ENCODE measurements at regions of chr2 and their contacts with region 1.

Region 1: DNA sequence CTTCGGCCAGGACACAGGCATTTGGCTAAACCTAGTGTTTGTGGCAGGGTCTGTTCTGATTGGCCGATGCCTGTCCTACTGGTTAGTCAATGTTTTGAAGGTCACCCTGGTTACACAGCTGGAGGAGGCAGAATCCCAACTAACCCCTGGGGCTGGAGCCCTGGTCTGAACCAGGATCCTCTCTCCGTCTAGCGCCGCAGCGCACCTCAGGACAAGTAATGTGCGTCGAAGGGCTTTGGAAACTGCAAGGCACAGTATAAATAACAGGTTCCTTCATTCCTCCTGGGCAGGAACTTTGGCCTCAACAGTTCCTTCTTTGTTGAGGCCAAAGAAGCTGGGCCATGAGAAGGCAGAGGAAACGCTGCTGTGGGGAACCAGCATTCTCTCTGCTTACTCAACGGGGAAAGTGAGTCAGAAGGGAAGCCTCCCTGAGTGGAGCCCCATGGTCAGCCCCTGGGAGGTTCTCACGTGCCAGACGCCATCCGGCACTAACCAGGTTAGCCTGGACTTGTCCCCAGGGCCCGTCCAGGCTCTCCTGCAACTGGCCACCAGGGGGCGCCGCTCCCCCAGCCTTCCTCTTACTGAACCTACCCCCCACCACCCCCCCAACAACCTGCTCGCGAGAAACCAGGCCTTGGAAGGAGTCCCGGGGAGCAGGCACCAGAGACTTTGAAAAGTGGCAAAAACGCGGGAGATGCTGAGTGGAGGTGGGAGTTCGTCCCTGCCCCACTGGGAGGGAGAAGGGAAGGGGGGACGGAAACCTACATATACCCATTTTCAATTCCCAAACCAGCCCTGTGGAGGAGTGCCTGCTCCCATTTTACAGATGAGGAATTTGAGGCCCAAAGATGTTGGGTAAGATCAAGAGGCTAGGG is 19.8 kb downstream of the TEX44 start:
- DNase-seq: peak; percentile 71
- H3K4me3 ChIP-seq: no peak overlapping the region
- CTCF ChIP-seq: peak; percentile 87

Region 2: GRCh38 chr2:231523451-231524285 is 88.7 kb before region 1 on chr2:
- CTCF ChIA-PET with region 1: no interaction called
- POLR2A ChIA-PET with region 1: no interaction called
- DNase-seq: no peak
- H3K4me3 ChIP-seq: no peak overlapping the region
- CTCF ChIP-seq: no peak

Region 3: GRCh38 chr2:231563378-231563961 is 48.9 kb before region 1 on chr2:
- CTCF ChIA-PET with region 1: interaction called, 15 read pairs
- POLR2A ChIA-PET with region 1: no interaction called
- DNase-seq: no peak
- H3K4me3 ChIP-seq: no peak overlapping the region
- CTCF ChIP-seq: peak; percentile 79

Region 4: GRCh38 chr2:231583982-231584381 is 28.4 kb before region 1 on chr2:
- CTCF ChIA-PET with region 1: no interaction called
- POLR2A ChIA-PET with region 1: no interaction called
- DNase-seq: no peak
- H3K4me3 ChIP-seq: no peak overlapping the region
- CTCF ChIP-seq: no peak

Region 5: GRCh38 chr2:231662028-231662810 is 49.8 kb after region 1 on chr2:
- CTCF ChIA-PET with region 1: interaction called, 23 read pairs
- POLR2A ChIA-PET with region 1: interaction called, 18 read pairs
- DNase-seq: peak; percentile 61
- H3K4me3 ChIP-seq: peak overlapping the region; percentile 43
- CTCF ChIP-seq: no peak

Region 6: DNA sequence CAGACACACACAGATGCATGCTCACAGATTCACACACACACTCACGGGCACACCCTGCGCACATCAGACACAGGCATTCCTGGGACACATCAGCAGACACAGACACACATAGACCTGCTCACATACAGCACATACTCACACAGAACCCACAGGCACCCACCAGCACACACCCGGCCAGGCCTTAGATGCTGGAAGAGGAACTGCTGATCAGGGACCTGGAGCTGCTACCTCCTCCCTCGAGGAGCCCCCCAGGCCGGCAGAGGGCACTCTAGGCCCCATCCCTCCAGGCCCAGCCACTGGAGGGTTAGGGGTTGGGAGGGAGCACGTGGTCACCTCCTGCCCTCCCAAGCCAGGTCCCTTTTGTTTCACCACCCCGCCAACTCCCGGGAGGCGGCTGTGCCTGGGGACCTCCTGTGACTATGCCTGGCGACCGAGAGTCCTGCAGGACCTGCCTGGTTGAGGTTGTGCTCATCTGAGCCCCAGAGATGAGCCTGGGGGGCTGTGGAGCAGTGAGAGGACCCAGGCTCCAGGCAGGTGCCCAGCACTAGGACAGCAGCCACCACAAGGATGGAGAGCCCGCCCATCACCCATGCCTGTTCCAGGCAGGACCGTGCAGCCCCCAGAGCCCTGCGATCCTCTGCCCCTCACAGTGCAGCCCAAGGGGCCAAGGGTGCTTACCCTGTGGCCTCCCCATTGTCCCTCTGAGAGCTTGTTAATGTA is 74.9 kb after region 1 on chr2:
- CTCF ChIA-PET with region 1: interaction called, 13 read pairs
- POLR2A ChIA-PET with region 1: no interaction called
- DNase-seq: no peak
- H3K4me3 ChIP-seq: no peak overlapping the region
- CTCF ChIP-seq: peak; percentile 73

Region 7: GRCh38 chr2:231706731-231707624 is 94.6 kb after region 1 on chr2:
- CTCF ChIA-PET with region 1: interaction called, 237 read pairs
- POLR2A ChIA-PET with region 1: interaction called, 28 read pairs
- DNase-seq: peak; percentile 90
- H3K4me3 ChIP-seq: peak overlapping the region; percentile 75
- CTCF ChIP-seq: peak; percentile 93